Activated CD4-positive, alpha-beta T cell treated with anti-CD3 and anti-CD28 coated beads for 36 hours (primary cell): ENCODE measurements at regions of chr14 and their contacts with region 1.

Region 1: GRCh38 chr14:56491299-56492285 is 88.0 kb upstream of the TMEM260 start:
- DNase-seq: peak; percentile 53
- ATAC-seq: peak; percentile 95
- H3K4me3 Mint-ChIP-seq: no peak overlapping the region
- H3K27ac Mint-ChIP-seq: no peak overlapping the region
- H3K4me1 Mint-ChIP-seq: peaks cover 7% of the 10 kb centered on the region
- H3K27me3 Mint-ChIP-seq: peaks cover 2% of the 10 kb centered on the region

Region 2: GRCh38 chr14:56474419-56475022 is 17.1 kb before region 1 on chr14:
- CTCF ChIA-PET with region 1: interaction called, 12 read pairs
- POLR2A ChIA-PET with region 1: no interaction called
- intact Hi-C with region 1: no loop called
- DNase-seq: no peak
- ATAC-seq: no peak
- H3K4me3 Mint-ChIP-seq: no peak overlapping the region
- H3K27ac Mint-ChIP-seq: no peak overlapping the region
- H3K4me1 Mint-ChIP-seq: no peaks in the 10 kb centered on the region
- H3K27me3 Mint-ChIP-seq: no peaks in the 10 kb centered on the region

Region 3: GRCh38 chr14:56603648-56604047 is 112.1 kb after region 1 on chr14:
- CTCF ChIA-PET with region 1: no interaction called
- POLR2A ChIA-PET with region 1: no interaction called
- intact Hi-C with region 1: no loop called
- DNase-seq: no peak
- ATAC-seq: no peak
- H3K4me3 Mint-ChIP-seq: no peak overlapping the region
- H3K27ac Mint-ChIP-seq: no peak overlapping the region
- H3K4me1 Mint-ChIP-seq: no peaks in the 10 kb centered on the region
- H3K27me3 Mint-ChIP-seq: no peaks in the 10 kb centered on the region

Region 4: GRCh38 chr14:56808383-56809269 is 317.0 kb after region 1 on chr14:
- CTCF ChIA-PET with region 1: no interaction called
- POLR2A ChIA-PET with region 1: no interaction called
- intact Hi-C with region 1: no loop called
- DNase-seq: no peak
- ATAC-seq: no peak
- H3K4me3 Mint-ChIP-seq: no peak overlapping the region
- H3K27ac Mint-ChIP-seq: no peak overlapping the region
- H3K4me1 Mint-ChIP-seq: peaks cover 26% of the 10 kb centered on the region
- H3K27me3 Mint-ChIP-seq: peaks cover 77% of the 10 kb centered on the region

Region 5: DNA sequence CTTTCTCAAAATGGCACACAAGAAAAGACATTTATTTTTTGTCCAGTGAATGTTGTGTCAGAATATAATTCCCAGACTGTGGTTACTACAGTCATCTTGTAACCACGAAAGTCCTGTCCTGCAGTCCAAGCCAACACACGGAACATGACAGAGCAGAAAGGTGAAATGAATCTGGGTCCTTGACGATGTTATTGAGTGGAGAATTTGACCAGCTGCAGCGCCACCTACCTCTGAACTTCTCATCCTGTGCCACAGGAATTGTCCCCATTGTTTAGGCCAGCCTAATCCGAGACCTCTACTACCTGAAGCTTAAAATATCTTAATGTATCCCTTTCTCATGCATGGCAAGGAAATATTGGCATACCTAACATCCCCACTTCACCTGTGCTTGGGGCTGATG is 382.8 kb after region 1 on chr14:
- CTCF ChIA-PET with region 1: interaction called, 3 read pairs
- POLR2A ChIA-PET with region 1: no interaction called
- intact Hi-C with region 1: loop called in 1 of 2 experiments (anchors 5 kb)
- DNase-seq: peak; percentile 23
- ATAC-seq: no peak
- H3K4me3 Mint-ChIP-seq: no peak overlapping the region
- H3K27ac Mint-ChIP-seq: no peak overlapping the region
- H3K4me1 Mint-ChIP-seq: no peaks in the 10 kb centered on the region
- H3K27me3 Mint-ChIP-seq: peaks cover 12% of the 10 kb centered on the region

Region 6: GRCh38 chr14:57182760-57183503 is 691.3 kb after region 1 on chr14:
- CTCF ChIA-PET with region 1: interaction called, 4 read pairs
- POLR2A ChIA-PET with region 1: no interaction called
- intact Hi-C with region 1: loop called (anchors 2 to 5 kb)
- DNase-seq: peak; percentile 29
- ATAC-seq: no peak
- H3K4me3 Mint-ChIP-seq: no peak overlapping the region
- H3K27ac Mint-ChIP-seq: no peak overlapping the region
- H3K4me1 Mint-ChIP-seq: no peaks in the 10 kb centered on the region
- H3K27me3 Mint-ChIP-seq: peaks cover 15% of the 10 kb centered on the region

Region 7: DNA sequence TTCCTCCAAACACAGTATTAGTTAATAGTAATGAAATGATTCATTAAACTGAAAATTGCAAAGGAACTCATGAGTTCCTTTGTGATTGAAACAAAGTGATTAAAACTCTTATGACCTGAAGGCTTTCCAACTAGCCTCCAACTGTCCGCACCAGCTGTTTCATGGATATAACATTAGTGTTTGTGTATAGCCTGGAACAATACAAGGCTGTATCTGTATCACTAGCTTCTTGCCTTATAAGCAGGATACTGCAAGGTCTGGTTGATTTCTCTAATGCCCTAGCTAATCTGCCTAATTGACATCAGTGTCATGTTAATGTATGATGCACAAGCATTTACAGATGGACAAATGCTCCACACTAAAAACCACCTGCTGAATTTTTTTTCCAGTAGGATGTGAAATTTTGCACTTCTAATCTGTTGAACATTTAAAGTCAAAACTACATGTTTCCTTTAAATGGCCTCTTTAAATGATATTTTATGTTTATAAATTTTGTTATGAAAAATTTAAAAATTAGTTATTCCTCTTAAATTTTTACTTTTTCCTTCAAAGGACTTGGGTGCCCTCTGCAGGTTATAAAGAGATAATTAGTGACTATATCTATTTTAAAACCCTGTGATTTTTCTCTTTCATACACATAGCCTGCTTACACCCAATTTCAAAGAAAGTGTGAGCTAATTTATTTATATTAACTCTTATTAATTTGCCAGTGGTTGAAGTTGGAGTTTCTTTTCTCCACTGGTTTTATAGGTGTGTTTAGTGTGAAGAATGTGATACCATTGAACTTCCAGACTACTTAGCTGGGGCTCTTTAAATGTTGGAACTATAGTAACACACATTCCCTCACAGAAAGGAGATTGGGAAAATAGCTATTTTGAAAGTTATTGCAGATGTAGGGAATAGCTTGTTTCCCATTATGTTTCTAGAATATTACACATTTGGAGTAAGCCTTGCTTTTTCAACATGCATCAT is 802.6 kb after region 1 on chr14:
- CTCF ChIA-PET with region 1: interaction called, 12 read pairs
- POLR2A ChIA-PET with region 1: no interaction called
- intact Hi-C with region 1: no loop called
- DNase-seq: no peak
- ATAC-seq: no peak
- H3K4me3 Mint-ChIP-seq: no peak overlapping the region
- H3K27ac Mint-ChIP-seq: no peak overlapping the region
- H3K4me1 Mint-ChIP-seq: no peaks in the 10 kb centered on the region
- H3K27me3 Mint-ChIP-seq: no peaks in the 10 kb centered on the region

Region 8: GRCh38 chr14:58072288-58073071 is 1580.9 kb after region 1 on chr14:
- CTCF ChIA-PET with region 1: no interaction called
- POLR2A ChIA-PET with region 1: no interaction called
- intact Hi-C with region 1: loop called in 1 of 2 experiments (anchors 1 kb)
- DNase-seq: peak; percentile 70
- ATAC-seq: peak; percentile 78
- H3K4me3 Mint-ChIP-seq: no peak overlapping the region
- H3K27ac Mint-ChIP-seq: no peak overlapping the region
- H3K4me1 Mint-ChIP-seq: no peaks in the 10 kb centered on the region
- H3K27me3 Mint-ChIP-seq: peaks cover 11% of the 10 kb centered on the region